ENCODE measurements at regions of chr22 and their contacts with region 1.

Region 1: GRCh38 chr22:22959147-22959827 is 71.7 kb downstream of the IGLL5 start:
- DNase-seq: peak; percentile 31
- H3K4me3 ChIP-seq: no peak overlapping the region
- CTCF ChIP-seq: peak; percentile 73

Region 2: GRCh38 chr22:22787786-22788459 is 171.4 kb before region 1 on chr22:
- CTCF ChIA-PET with region 1: interaction called, 14 read pairs
- POLR2A ChIA-PET with region 1: no interaction called
- DNase-seq: no peak
- H3K4me3 ChIP-seq: no peak overlapping the region
- CTCF ChIP-seq: peak; percentile 75

Region 3: GRCh38 chr22:22855617-22856308 is 103.5 kb before region 1 on chr22:
- CTCF ChIA-PET with region 1: interaction called, 174 read pairs
- POLR2A ChIA-PET with region 1: no interaction called
- DNase-seq: no peak
- H3K4me3 ChIP-seq: no peak overlapping the region
- CTCF ChIP-seq: peak; percentile 46

Region 4: GRCh38 chr22:22877523-22878210 is 81.6 kb before region 1 on chr22:
- CTCF ChIA-PET with region 1: no interaction called
- POLR2A ChIA-PET with region 1: no interaction called
- DNase-seq: no peak
- H3K4me3 ChIP-seq: no peak overlapping the region
- CTCF ChIP-seq: peak; percentile 81

Region 5: DNA sequence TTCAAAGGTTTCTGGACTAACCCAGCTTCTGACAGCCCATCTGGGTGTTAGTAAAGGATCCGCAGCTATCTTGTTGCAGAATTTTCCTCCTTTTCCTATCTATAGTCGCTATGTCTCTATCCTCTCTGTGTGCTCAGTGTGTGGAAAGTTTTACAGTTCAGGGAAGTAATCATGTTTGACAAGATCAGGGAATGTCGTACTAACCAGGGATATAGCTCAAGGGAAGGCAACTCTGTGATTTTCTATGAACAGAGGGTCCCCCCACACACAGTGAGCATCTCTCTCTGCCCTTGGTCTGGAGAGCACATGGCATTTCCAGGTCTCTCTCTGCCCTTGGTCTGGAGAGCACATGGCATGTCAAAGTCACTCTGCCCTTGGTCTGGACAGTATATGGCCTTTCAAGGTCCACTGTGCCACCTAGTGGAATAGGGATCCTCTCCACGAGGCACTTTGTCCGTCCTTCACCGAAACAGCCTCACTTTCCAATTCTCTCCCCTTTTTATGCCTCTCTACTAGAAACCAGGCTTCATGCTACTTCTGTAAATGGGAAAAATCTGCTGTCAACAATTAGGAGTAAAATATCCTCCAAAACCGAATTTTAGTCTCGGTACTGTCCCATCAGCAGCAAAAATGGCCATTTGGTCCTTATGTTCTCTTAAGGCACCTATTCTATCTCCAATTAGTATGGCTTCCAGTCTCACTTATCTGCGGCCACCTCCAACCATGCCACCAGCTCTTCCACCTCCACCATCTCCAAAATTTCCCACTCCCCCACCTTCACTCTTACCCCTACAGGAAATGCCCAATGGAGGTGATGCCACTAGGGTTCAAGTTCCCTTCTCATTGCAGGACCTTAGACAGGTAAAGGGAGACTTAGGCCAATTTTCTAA is 17.0 kb after region 1 on chr22:
- CTCF ChIA-PET with region 1: interaction called, 55 read pairs
- POLR2A ChIA-PET with region 1: no interaction called
- DNase-seq: no peak
- H3K4me3 ChIP-seq: no peak overlapping the region
- CTCF ChIP-seq: no peak

Region 6: DNA sequence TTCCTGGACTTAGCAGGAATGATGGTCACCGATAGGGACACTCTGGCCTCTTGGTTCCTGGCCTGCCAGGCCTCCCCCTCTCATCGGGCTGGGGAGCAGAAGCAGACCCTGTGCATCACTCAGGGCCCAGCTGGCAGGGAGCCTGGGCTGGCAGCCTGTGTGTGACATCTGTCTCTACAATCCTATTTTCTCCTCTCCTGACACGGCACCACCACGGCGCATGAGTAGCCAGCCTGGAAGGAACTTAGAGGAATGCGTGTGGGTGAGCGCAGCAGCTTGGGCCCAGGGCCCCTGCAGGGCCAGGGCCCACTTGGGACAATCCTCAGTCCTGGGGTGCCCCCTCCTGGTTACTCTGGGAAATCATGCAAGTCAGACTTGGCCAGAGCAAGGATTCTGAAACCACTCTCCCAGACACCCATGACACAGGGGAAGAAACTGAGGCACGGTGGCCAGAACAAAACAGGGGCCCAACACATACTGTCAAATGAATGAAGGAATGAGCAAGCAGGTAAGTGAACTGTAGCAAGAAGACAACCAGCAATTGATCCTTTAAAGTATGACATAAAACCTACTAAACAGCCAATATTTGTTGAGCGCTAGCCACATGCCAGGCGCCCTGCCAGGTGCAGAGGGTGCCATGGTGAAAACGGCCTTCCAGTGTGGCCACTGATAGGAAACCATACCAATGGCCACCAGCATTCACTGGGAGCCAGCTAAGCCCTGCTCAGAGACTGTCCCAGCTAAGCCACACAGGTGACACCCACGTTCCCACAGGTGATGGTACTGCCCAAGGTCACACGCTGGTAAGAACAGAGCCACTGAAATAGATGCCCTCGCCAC is 169.2 kb after region 1 on chr22:
- CTCF ChIA-PET with region 1: interaction called, 800 read pairs
- POLR2A ChIA-PET with region 1: no interaction called
- DNase-seq: no peak
- H3K4me3 ChIP-seq: no peak overlapping the region
- CTCF ChIP-seq: peak; percentile 79

Region 7: GRCh38 chr22:23385291-23386244 is 426.3 kb after region 1 on chr22:
- CTCF ChIA-PET with region 1: interaction called, 26 read pairs
- POLR2A ChIA-PET with region 1: no interaction called
- DNase-seq: peak; percentile 17
- H3K4me3 ChIP-seq: no peak overlapping the region
- CTCF ChIP-seq: peak; percentile 99

Measured in AG04449 (cell line).